Naive thymus-derived CD4-positive, alpha-beta T cell (primary cell): ENCODE measurements at regions of chr1 and their contacts with region 1.

Region 1: GRCh38 chr1:184075055-184076029 is 23.8 kb downstream of the TSEN15 start:
- DNase-seq: peak in 4 of 9 donors; percentile 2 to 34 (median 12)
- ATAC-seq: peak; percentile 75
- H3K4me3 ChIP-seq: no peak overlapping the region
- H3K4me3 Mint-ChIP-seq: no peak overlapping the region
- H3K27ac ChIP-seq: peak overlapping the region; percentile 32
- H3K27ac Mint-ChIP-seq: peak overlapping the region in 4 of 9 donors; percentile 7 to 73 (median 40)
- H3K4me1 ChIP-seq: no peaks in the 10 kb centered on the region
- H3K4me1 Mint-ChIP-seq: peaks cover 0 to 5% (median 0%) of the 10 kb centered on the region in 7 donors
- H3K27me3 ChIP-seq: no peaks in the 10 kb centered on the region
- H3K27me3 Mint-ChIP-seq: no peaks in the 10 kb centered on the region

Region 2: GRCh38 chr1:184051485-184052193 is 23.7 kb before region 1 on chr1 and contains the start of gene TSEN15:
- CTCF ChIA-PET with region 1: no interaction called
- POLR2A ChIA-PET with region 1: interaction called, 4 read pairs
- intact Hi-C with region 1: loop called in 1 of 2 experiments (anchors 1 kb)
- DNase-seq: peak; percentile 54 to 75 (median 68)
- ATAC-seq: peak; percentile 98
- H3K4me3 ChIP-seq: peak within 1 kb of the TSS; percentile 87
- H3K4me3 Mint-ChIP-seq: peak within 1 kb of the TSS; percentile 91 to 99 (median 98)
- H3K27ac ChIP-seq: peak within 1 kb of the TSS; percentile 77
- H3K27ac Mint-ChIP-seq: peak within 1 kb of the TSS; percentile 89 to 99 (median 95)
- H3K4me1 ChIP-seq: peaks cover 19 to 23% of the 10 kb centered on the region in 2 donors
- H3K4me1 Mint-ChIP-seq: peaks cover 18 to 56% (median 45%) of the 10 kb centered on the region in 7 donors
- H3K27me3 ChIP-seq: peaks cover 0 to 3% of the 10 kb centered on the region in 2 donors
- H3K27me3 Mint-ChIP-seq: peaks cover 13 to 33% (median 20%) of the 10 kb centered on the region in 5 donors
- total RNA-seq, gene TSEN15: 12.7 to 48.9 (median 31.1) TPM

Region 3: GRCh38 chr1:184163674-184164465 is 88.5 kb after region 1 on chr1:
- CTCF ChIA-PET with region 1: no interaction called
- POLR2A ChIA-PET with region 1: no interaction called
- intact Hi-C with region 1: no loop called
- DNase-seq: no peak
- ATAC-seq: no peak
- H3K4me3 ChIP-seq: no peak overlapping the region
- H3K4me3 Mint-ChIP-seq: no peak overlapping the region
- H3K27ac ChIP-seq: no peak overlapping the region
- H3K27ac Mint-ChIP-seq: peak overlapping the region in 1 of 9 donors; percentile 13
- H3K4me1 ChIP-seq: no peaks in the 10 kb centered on the region
- H3K4me1 Mint-ChIP-seq: peaks cover 0 to 2% (median 0%) of the 10 kb centered on the region in 7 donors
- H3K27me3 ChIP-seq: no peaks in the 10 kb centered on the region
- H3K27me3 Mint-ChIP-seq: peaks cover 2 to 8% (median 7%) of the 10 kb centered on the region in 5 donors

Region 4: DNA sequence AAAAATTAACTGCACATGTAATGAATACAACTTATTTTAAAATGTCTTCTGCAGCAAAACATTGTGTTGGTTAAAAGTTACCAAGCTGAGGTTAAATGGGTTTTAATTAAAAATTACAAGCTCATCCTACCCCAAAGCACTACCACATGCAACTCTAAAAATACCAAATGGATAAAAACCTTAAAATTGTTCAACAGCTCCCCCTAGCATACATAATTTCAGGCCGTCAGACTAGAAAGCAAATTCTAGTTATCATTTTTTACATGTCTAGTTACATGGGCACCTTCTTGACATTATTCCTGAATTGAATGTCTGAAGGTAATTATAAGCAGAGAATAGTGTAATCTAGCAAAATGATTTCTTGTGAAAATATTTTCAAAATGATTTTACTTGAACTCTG is 488.0 kb after region 1 on chr1:
- CTCF ChIA-PET with region 1: no interaction called
- POLR2A ChIA-PET with region 1: no interaction called
- intact Hi-C with region 1: loop called in 1 of 2 experiments (anchors 2 kb)
- DNase-seq: no peak
- ATAC-seq: no peak
- H3K4me3 ChIP-seq: no peak overlapping the region
- H3K4me3 Mint-ChIP-seq: no peak overlapping the region
- H3K27ac ChIP-seq: no peak overlapping the region
- H3K27ac Mint-ChIP-seq: no peak overlapping the region
- H3K4me1 ChIP-seq: no peaks in the 10 kb centered on the region
- H3K4me1 Mint-ChIP-seq: peaks cover 0 to 4% (median 0%) of the 10 kb centered on the region in 7 donors
- H3K27me3 ChIP-seq: no peaks in the 10 kb centered on the region
- H3K27me3 Mint-ChIP-seq: peaks cover 3 to 18% (median 8%) of the 10 kb centered on the region in 5 donors

Region 5: GRCh38 chr1:184691719-184692324 is 616.5 kb after region 1 on chr1:
- CTCF ChIA-PET with region 1: no interaction called
- POLR2A ChIA-PET with region 1: no interaction called
- intact Hi-C with region 1: loop called in 1 of 2 experiments (anchors 2 kb)
- DNase-seq: no peak
- ATAC-seq: no peak
- H3K4me3 ChIP-seq: no peak overlapping the region
- H3K4me3 Mint-ChIP-seq: no peak overlapping the region
- H3K27ac ChIP-seq: no peak overlapping the region
- H3K27ac Mint-ChIP-seq: peak overlapping the region in 3 of 9 donors; percentile 2 to 30 (median 27)
- H3K4me1 ChIP-seq: no peaks in the 10 kb centered on the region
- H3K4me1 Mint-ChIP-seq: peaks cover 0 to 6% (median 2%) of the 10 kb centered on the region in 7 donors
- H3K27me3 ChIP-seq: no peaks in the 10 kb centered on the region
- H3K27me3 Mint-ChIP-seq: no peaks in the 10 kb centered on the region